ENCODE measurements at regions of chr10 and their contacts with region 1.

Region 1: GRCh38 chr10:63083904-63084689 is 49.0 kb upstream of the NRBF2 start:
- DNase-seq: peak; percentile 69 to 80 (median 72)
- ATAC-seq: peak; percentile 85 to 86
- H3K4me3 ChIP-seq: no peak overlapping the region
- H3K27ac ChIP-seq: no peak overlapping the region
- H3K4me1 ChIP-seq: no peaks in the 10 kb centered on the region
- H3K27me3 ChIP-seq: peaks cover 2% of the 10 kb centered on the region

Region 2: GRCh38 chr10:62443866-62444265 is 640.2 kb before region 1 on chr10:
- intact Hi-C with region 1: loop called in 1 of 4 experiments (anchors 10 kb)
- DNase-seq: no peak
- ATAC-seq: peak; percentile 32 to 37
- H3K4me3 ChIP-seq: no peak overlapping the region
- H3K27ac ChIP-seq: no peak overlapping the region
- H3K4me1 ChIP-seq: peaks cover 3% of the 10 kb centered on the region
- H3K27me3 ChIP-seq: no peaks in the 10 kb centered on the region